Cardiac septum (tissue), 1 donor: ENCODE measurements at regions of chr16 and their contacts with region 1.

Region 1: GRCh38 chr16:86865524-86866301 is 287.4 kb downstream of the FOXL1 start:
- DNase-seq: peak; percentile 89

Region 2: GRCh38 chr16:86961171-86961601 is 95.5 kb after region 1 on chr16:
- intact Hi-C with region 1: no loop called
- DNase-seq: no peak

Region 3: GRCh38 chr16:87043231-87044031 is 177.7 kb after region 1 on chr16:
- intact Hi-C with region 1: loop called (anchors 5 kb)
- DNase-seq: peak; percentile 74